GM12878 (cell line): ENCODE measurements at regions of chr14 and their contacts with region 1.

Region 1: GRCh38 chr14:91060351-91061055 is at the start of gene RPS6KA5:
- DNase-seq: peak; percentile 100
- ATAC-seq: peak; percentile 90
- H3K4me3 ChIP-seq: peak within 1 kb of the TSS; percentile 87
- H3K27ac ChIP-seq: peak within 1 kb of the TSS; percentile 72
- H3K4me1 ChIP-seq: peaks cover 11% of the 10 kb centered on the region
- H3K27me3 ChIP-seq: no peaks in the 10 kb centered on the region
- CTCF ChIP-seq: no peak; a peak in 2 of 6 replicates
- EP300 ChIP-seq: peak in 1 of 2 experiments; percentile 53; a peak in 2 of 4 replicates
- POLR2A ChIP-seq: peak; percentile 75
- RAD21 ChIP-seq: no peak
- polyA plus RNA-seq, gene RPS6KA5: 1.4 to 1.5 TPM

Region 2: GRCh38 chr14:90726656-90727055 is 333.8 kb before region 1 on chr14:
- CTCF ChIA-PET with region 1: no interaction called
- POLR2A ChIA-PET with region 1: no interaction called
- RAD21 ChIA-PET with region 1: no interaction called
- SMC1A ChIA-PET with region 1: no interaction called
- in situ Hi-C with region 1: no loop called
- intact Hi-C with region 1: no loop called
- DNase-seq: no peak
- ATAC-seq: no peak
- H3K4me3 ChIP-seq: no peak overlapping the region
- H3K27ac ChIP-seq: no peak overlapping the region
- H3K4me1 ChIP-seq: no peaks in the 10 kb centered on the region
- H3K27me3 ChIP-seq: peaks cover 0 to 2% of the 10 kb centered on the region in 2 experiments; a peak in 1 of 4 replicates
- CTCF ChIP-seq: no peak
- EP300 ChIP-seq: no peak
- POLR2A ChIP-seq: no peak
- RAD21 ChIP-seq: no peak

Region 3: GRCh38 chr14:90883782-90884181 is 176.7 kb before region 1 on chr14:
- CTCF ChIA-PET with region 1: no interaction called
- POLR2A ChIA-PET with region 1: no interaction called
- RAD21 ChIA-PET with region 1: no interaction called
- SMC1A ChIA-PET with region 1: no interaction called
- in situ Hi-C with region 1: no loop called
- intact Hi-C with region 1: no loop called
- DNase-seq: no peak
- ATAC-seq: no peak
- H3K4me3 ChIP-seq: no peak overlapping the region
- H3K27ac ChIP-seq: no peak overlapping the region
- H3K4me1 ChIP-seq: no peaks in the 10 kb centered on the region
- H3K27me3 ChIP-seq: no peaks in the 10 kb centered on the region
- CTCF ChIP-seq: no peak
- EP300 ChIP-seq: no peak
- POLR2A ChIP-seq: no peak
- RAD21 ChIP-seq: no peak

Region 4: GRCh38 chr14:90985601-90986242 is 74.8 kb before region 1 on chr14:
- CTCF ChIA-PET with region 1: interaction called, 20 read pairs
- POLR2A ChIA-PET with region 1: interaction called, 4 read pairs
- RAD21 ChIA-PET with region 1: interaction called, 11 read pairs
- SMC1A ChIA-PET with region 1: interaction called, 20 read pairs
- in situ Hi-C with region 1: no loop called
- intact Hi-C with region 1: loop called (anchors 5 kb)
- DNase-seq: no peak
- ATAC-seq: peak; percentile 86
- H3K4me3 ChIP-seq: no peak overlapping the region
- H3K27ac ChIP-seq: no peak overlapping the region
- H3K4me1 ChIP-seq: peaks cover 14% of the 10 kb centered on the region
- H3K27me3 ChIP-seq: no peaks in the 10 kb centered on the region
- CTCF ChIP-seq: no peak; a peak in 1 of 6 replicates
- EP300 ChIP-seq: no peak
- POLR2A ChIP-seq: no peak
- RAD21 ChIP-seq: peak; percentile 52

Region 5: GRCh38 chr14:91035855-91036254 is 24.6 kb before region 1 on chr14:
- CTCF ChIA-PET with region 1: interaction called, 11 read pairs
- POLR2A ChIA-PET with region 1: interaction called, 8 read pairs
- RAD21 ChIA-PET with region 1: no interaction called
- SMC1A ChIA-PET with region 1: interaction called, 7 read pairs
- in situ Hi-C with region 1: no loop called
- intact Hi-C with region 1: no loop called
- DNase-seq: peak; percentile 24
- ATAC-seq: peak; percentile 67
- H3K4me3 ChIP-seq: no peak overlapping the region
- H3K27ac ChIP-seq: no peak overlapping the region; the same call in 1 of the 2 replicates
- H3K4me1 ChIP-seq: peaks cover 13% of the 10 kb centered on the region
- H3K27me3 ChIP-seq: no peaks in the 10 kb centered on the region
- CTCF ChIP-seq: no peak
- EP300 ChIP-seq: no peak
- POLR2A ChIP-seq: no peak
- RAD21 ChIP-seq: no peak

Region 6: DNA sequence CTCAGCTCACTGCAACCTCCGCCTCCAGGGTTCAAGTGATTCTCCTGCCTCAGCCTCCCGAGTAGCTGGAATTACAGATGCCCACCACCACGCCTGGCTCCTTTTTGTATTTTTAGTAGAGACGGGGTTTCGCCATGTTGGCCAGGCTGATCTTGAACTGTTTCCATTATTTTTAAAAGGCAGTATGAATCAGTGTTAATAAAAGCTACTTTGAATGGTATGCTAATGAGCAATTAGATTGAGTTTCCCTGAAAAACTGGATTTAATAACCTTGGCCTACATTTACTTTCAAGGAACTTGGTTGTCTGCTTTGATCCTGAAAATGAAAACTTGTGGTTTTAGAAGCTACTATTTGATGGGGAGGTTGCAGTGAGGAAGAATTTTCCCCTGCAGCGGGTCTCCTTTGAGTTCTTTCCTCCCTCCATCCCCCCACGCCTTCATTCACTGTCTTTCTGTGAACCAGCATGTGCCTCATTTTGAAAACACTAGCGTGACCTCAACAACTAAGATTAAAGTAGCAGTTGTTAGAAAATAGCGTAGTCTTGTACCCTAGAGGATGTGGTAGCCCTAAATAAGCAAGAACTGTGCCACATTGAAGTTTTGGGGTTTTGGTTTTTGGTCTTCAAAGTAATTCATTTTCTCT is 17.7 kb after region 1 on chr14:
- CTCF ChIA-PET with region 1: interaction called, 7 read pairs
- POLR2A ChIA-PET with region 1: interaction called, 4 read pairs
- RAD21 ChIA-PET with region 1: interaction called, 10 read pairs
- SMC1A ChIA-PET with region 1: interaction called, 11 read pairs
- in situ Hi-C with region 1: no loop called
- intact Hi-C with region 1: loop called (anchors 1 kb)
- DNase-seq: peak; percentile 77
- ATAC-seq: peak; percentile 98
- H3K4me3 ChIP-seq: no peak overlapping the region
- H3K27ac ChIP-seq: peak overlapping the region; percentile 61; the same call in 1 of the 2 replicates
- H3K4me1 ChIP-seq: peaks cover 5% of the 10 kb centered on the region
- H3K27me3 ChIP-seq: no peaks in the 10 kb centered on the region
- CTCF ChIP-seq: no peak
- EP300 ChIP-seq: peak; percentile 72 to 83; a peak in 3 of 4 replicates
- POLR2A ChIP-seq: no peak
- RAD21 ChIP-seq: 0 out of 2 replicates have a peak, but pooled peaks have one; percentile 4

Region 7: GRCh38 chr14:91138511-91139359 is 78.2 kb after region 1 on chr14:
- CTCF ChIA-PET with region 1: interaction called, 15 read pairs
- POLR2A ChIA-PET with region 1: interaction called, 7 read pairs
- RAD21 ChIA-PET with region 1: interaction called, 30 read pairs
- SMC1A ChIA-PET with region 1: interaction called, 29 read pairs
- in situ Hi-C with region 1: no loop called
- intact Hi-C with region 1: no loop called
- DNase-seq: no peak
- ATAC-seq: peak; percentile 70
- H3K4me3 ChIP-seq: no peak overlapping the region
- H3K27ac ChIP-seq: no peak overlapping the region
- H3K4me1 ChIP-seq: peaks cover 14% of the 10 kb centered on the region
- H3K27me3 ChIP-seq: no peaks in the 10 kb centered on the region
- CTCF ChIP-seq: peak; percentile 47 to 61 (median 49)
- EP300 ChIP-seq: no peak
- POLR2A ChIP-seq: no peak
- RAD21 ChIP-seq: peak; percentile 53